ENCODE measurements at regions of chr16 and their contacts with region 1.

Region 1: DNA sequence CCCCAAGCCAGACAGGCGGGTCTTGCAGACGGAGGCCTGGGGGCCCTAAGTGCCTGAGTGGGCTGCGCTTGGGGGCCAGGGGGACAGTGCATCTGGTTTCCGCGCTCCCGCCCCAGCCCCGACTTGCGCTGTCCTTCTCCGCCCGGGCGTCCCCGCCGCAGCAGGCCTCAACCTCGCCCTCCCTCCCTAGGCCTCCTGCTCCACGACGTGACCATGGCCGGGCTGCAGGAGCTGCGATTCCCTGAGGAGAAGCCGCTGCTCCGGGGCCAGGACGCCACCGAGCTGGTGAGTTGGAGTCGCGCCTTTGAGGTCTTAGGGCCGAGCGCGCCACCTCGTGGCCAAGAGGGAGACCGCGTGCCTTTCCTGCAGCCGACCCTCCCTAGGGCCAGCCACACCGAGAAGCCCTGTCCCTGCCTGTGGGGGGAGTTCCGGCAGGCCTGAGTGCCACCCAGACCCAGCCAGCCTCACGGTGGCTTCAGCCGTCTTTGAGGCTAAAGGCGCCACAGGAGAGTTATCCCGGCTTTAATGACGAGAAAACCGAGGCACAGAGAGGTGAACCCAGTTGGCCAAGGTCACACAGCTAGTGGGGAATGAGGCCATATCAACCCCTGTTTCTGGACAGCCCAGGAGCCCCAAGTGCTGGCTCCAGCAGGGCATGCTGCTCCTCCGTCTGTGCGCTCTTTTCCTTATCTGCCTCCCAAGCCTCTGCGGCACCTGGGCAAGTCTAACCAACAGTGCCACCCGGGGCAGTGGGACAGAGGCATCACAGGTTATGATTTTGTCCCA is 12.2 kb upstream of the NDRG4 start:
- H3K4me3 ChIP-seq: no peak overlapping the region
- H3K27ac ChIP-seq: no peak overlapping the region
- H3K4me1 ChIP-seq: no peaks in the 10 kb centered on the region
- CTCF ChIP-seq: peak; percentile 99

Region 2: GRCh38 chr16:58299757-58300349 is 187.9 kb before region 1 on chr16:
- CTCF ChIA-PET with region 1: interaction called, 39 read pairs
- POLR2A ChIA-PET with region 1: no interaction called
- H3K4me3 ChIP-seq: no peak overlapping the region
- H3K27ac ChIP-seq: no peak overlapping the region
- H3K4me1 ChIP-seq: no peaks in the 10 kb centered on the region
- CTCF ChIP-seq: no peak

Region 3: GRCh38 chr16:58329147-58329546 is 158.6 kb before region 1 on chr16:
- CTCF ChIA-PET with region 1: interaction called, 140 read pairs
- POLR2A ChIA-PET with region 1: no interaction called
- H3K4me3 ChIP-seq: no peak overlapping the region
- H3K27ac ChIP-seq: no peak overlapping the region
- H3K4me1 ChIP-seq: peaks cover 13% of the 10 kb centered on the region; the same call in 1 of the 2 replicates
- CTCF ChIP-seq: no peak

Region 4: DNA sequence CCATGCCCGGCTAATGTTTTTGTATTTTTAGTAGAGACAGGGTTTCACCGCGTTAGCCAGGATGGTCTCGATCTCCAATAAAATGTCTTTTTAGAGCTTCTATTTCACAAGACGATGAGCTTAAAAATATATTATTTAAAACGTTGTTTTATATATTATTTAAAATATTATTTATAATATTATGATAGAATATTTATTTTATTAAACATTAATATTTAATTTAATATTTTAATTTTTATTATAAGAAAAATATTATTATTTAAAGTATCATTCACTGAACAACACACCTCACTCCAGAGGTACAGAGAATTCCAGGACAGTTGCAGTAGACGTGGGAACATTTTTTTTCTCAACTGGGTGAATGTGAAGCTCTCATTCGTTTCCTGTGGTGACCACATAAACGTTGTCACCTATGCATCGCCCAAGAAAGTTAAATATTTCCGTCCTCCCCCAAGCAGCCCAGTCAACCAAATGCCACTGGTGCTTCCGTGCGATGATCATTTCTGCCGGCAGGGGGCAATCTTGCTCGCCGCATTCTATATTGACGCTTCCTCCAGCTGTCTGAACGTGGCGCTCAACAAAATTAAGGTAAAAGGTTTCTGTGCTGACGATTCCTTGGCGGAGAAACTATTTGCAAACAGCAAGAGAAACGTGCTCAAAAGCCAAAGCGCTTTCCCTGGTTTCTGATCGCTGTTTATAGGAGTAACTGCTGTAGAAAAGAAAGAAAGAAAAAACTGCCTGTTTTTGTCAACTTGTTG is 151.2 kb before region 1 on chr16:
- CTCF ChIA-PET with region 1: interaction called, 140 read pairs
- POLR2A ChIA-PET with region 1: interaction called, 4 read pairs
- H3K4me3 ChIP-seq: no peak overlapping the region
- H3K27ac ChIP-seq: no peak overlapping the region
- H3K4me1 ChIP-seq: no peaks in the 10 kb centered on the region
- CTCF ChIP-seq: peak; percentile 92

Region 5: GRCh38 chr16:58345574-58346354 is 142.0 kb before region 1 on chr16:
- CTCF ChIA-PET with region 1: interaction called, 19 read pairs
- POLR2A ChIA-PET with region 1: no interaction called
- H3K4me3 ChIP-seq: no peak overlapping the region
- H3K27ac ChIP-seq: no peak overlapping the region
- H3K4me1 ChIP-seq: no peaks in the 10 kb centered on the region
- CTCF ChIP-seq: no peak

Measured in HEK293 (cell line).